ENCODE measurements at regions of chr1 and their contacts with region 1.

Region 1: GRCh38 chr1:64242895-64243756 is 39.7 kb downstream of the UBE2U start:
- DNase-seq: no peak
- ATAC-seq: no peak
- H3K4me3 ChIP-seq: no peak overlapping the region
- H3K4me1 ChIP-seq: no peaks in the 10 kb centered on the region
- CTCF ChIP-seq: no peak

Region 2: DNA sequence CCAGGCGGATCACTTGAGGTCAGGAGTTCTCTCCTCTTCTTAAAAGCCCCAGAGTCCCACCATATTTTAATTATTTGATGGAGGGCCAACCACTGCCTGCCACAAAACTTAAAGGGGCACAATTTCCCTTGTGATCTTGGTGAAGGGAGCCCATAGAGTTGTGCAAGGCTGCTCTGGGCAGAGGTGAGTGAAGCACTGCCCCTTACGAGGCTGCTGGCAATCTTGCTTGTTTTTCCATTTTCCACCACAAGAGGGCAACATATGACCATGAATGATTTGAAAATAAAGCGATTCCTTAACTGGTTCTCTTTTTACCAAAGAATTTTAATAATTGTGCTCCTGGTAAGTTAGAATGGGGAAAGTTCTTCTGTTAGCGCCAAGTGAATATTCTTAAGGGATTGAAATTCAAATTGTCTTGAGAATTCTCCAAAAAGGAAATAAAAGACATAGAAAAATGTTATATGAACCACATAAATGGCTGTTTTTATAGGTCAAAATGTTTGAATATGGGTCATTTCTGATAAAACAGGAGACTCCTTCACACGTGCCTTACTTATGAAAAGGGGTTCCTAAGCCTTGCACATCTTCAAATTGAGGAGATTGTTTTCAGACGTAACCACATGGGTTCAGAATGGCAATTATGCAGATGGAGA is 627.2 kb before region 1 on chr1:
- intact Hi-C with region 1: loop called (anchors 10 kb)
- DNase-seq: peak in 1 of 3 donors; percentile 90
- ATAC-seq: peak; percentile 85
- H3K4me3 ChIP-seq: no peak overlapping the region
- H3K4me1 ChIP-seq: no peaks in the 10 kb centered on the region
- CTCF ChIP-seq: peak; percentile 68

Region 3: DNA sequence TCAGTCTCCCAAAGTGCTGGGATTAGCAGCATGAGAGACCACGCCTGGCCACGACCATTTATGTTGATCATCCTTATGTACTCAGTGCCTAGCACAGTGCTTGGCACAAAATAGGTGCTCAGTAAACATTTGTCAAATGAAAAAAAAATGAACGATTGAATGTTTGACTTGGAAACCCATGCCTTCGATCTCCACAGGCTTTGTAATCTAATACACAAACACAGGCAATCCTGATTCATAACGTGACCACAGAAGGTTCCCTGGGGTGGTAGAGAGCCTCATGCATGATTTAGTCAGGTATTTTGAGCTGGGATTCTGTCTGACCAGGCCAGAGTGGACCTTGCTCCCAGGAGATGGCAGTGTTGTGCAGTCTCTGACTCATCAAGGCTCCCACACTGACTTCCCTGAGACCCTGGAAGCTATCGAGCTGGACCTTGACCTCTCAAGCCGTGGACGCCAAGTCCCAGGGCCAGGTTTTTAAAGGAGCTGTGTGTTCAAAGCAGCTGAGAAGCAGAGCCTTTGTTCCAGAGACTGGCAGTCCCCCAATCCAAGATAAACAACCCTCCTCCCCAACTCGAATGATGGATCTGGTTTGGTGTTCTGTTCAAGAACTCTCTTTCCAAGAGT is 568.8 kb before region 1 on chr1:
- intact Hi-C with region 1: loop called in 1 of 2 experiments (anchors 10 kb)
- DNase-seq: peak; percentile 71 to 86 (median 78)
- ATAC-seq: peak; percentile 98
- H3K4me3 ChIP-seq: no peak overlapping the region
- H3K4me1 ChIP-seq: no peaks in the 10 kb centered on the region
- CTCF ChIP-seq: peak; percentile 24

Measured in mucosa of descending colon (tissue), 3 donors.